H1 (cell line): ENCODE measurements at regions of chr6 and their contacts with region 1.

Region 1: DNA sequence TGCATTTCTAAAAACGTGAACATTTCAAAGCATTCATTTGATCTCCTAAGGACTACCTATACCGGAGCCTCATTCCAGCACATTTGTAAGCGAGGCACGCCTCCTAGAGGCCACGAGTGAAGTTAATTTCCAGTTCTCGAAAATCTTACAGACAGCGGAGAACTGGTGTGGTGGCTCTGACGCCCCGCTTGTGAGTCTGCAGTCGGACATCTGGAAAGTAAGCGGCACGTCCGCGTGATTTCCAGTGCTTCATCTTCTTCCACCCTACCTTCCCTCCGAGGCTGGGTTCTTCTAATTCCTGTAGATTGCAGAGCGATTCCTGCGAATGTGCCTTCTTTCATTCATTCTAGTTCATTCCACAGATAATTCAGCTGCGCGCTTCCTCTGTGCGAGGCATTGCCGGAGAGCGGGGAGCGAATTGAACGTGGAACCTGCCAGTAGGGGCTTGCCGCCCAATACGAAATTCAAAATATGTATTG is 810 bp upstream of the PRIM2 start:
- DNase-seq: peak; percentile 56 to 81
- H3K4me3 ChIP-seq: peak overlapping the region; percentile 77 to 83 (median 80)
- H3K27ac ChIP-seq: no peak overlapping the region
- H3K4me1 ChIP-seq: no peaks in the 10 kb centered on the region
- H3K27me3 ChIP-seq: no peaks in the 10 kb centered on the region
- CTCF ChIP-seq: peak; percentile 40 to 87 (median 84)
- EP300 ChIP-seq: no peak
- POLR2A ChIP-seq: no peak
- RAD21 ChIP-seq: peak; percentile 98 to 99

Region 2: DNA sequence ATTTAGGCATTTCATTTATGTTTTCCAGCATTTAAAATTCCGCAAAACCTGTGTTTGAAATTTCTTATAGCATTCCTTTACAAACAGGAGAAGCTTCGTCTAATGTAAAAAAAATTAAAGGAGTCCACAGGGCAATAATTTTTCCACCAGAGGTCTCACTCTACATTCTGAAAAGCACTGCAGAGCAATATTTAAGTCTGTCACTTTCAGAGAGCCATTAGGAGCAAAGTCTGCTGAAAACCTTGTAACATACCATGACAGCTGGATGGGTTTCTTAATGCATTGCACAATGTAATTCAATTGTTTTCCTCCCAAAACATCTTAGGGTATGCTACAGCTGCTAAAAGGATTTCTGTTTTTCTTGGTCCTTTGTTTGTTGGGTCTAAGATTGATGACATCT is 126.5 kb before region 1 on chr6:
- CTCF ChIA-PET with region 1: interaction called, 13 read pairs
- POLR2A ChIA-PET with region 1: interaction called, 3 read pairs
- DNase-seq: no peak
- H3K4me3 ChIP-seq: no peak overlapping the region
- H3K27ac ChIP-seq: no peak overlapping the region
- H3K4me1 ChIP-seq: no peaks in the 10 kb centered on the region
- H3K27me3 ChIP-seq: no peaks in the 10 kb centered on the region
- CTCF ChIP-seq: no peak
- EP300 ChIP-seq: no peak
- POLR2A ChIP-seq: no peak
- RAD21 ChIP-seq: peak; percentile 16 to 17; a peak in 1 of 4 replicates

Region 3: GRCh38 chr6:57303931-57304681 is 12.5 kb before region 1 on chr6:
- CTCF ChIA-PET with region 1: interaction called, 15 read pairs
- POLR2A ChIA-PET with region 1: no interaction called
- DNase-seq: no peak
- H3K4me3 ChIP-seq: no peak overlapping the region
- H3K27ac ChIP-seq: no peak overlapping the region
- H3K4me1 ChIP-seq: no peaks in the 10 kb centered on the region
- H3K27me3 ChIP-seq: no peaks in the 10 kb centered on the region
- CTCF ChIP-seq: no peak
- EP300 ChIP-seq: no peak
- POLR2A ChIP-seq: no peak
- RAD21 ChIP-seq: no peak